Heart right ventricle (tissue), 16 donors: ENCODE measurements at regions of chr17 and their contacts with region 1.

Region 1: GRCh38 chr17:37650419-37651003 is 7.3 kb upstream of the DDX52 start:
- DNase-seq: peak in 1 of 2 donors; percentile 6
- ATAC-seq: peak in 3 of 8 donors; percentile 38 to 59 (median 39)
- H3K4me3 ChIP-seq: no peak overlapping the region
- H3K27ac ChIP-seq: no peak overlapping the region
- H3K4me1 ChIP-seq: peaks cover 0 to 9% (median 0%) of the 10 kb centered on the region in 9 donors
- H3K27me3 ChIP-seq: peaks cover 0 to 78% (median 19%) of the 10 kb centered on the region in 7 donors
- CTCF ChIP-seq: peak; percentile 4 to 56 (median 48)

Region 2: GRCh38 chr17:37710344-37710886 is 59.9 kb after region 1 on chr17:
- intact Hi-C with region 1: loop called in 1 of 10 experiments (anchors 10 kb)
- DNase-seq: no peak
- ATAC-seq: no peak
- H3K4me3 ChIP-seq: no peak overlapping the region
- H3K27ac ChIP-seq: no peak overlapping the region
- H3K4me1 ChIP-seq: no peaks in the 10 kb centered on the region
- H3K27me3 ChIP-seq: peaks cover 0 to 45% (median 22%) of the 10 kb centered on the region in 7 donors
- CTCF ChIP-seq: no peak

Region 3: GRCh38 chr17:37761059-37761458 is 110.5 kb after region 1 on chr17:
- intact Hi-C with region 1: loop called in 1 of 10 experiments (anchors 10 kb)
- DNase-seq: no peak
- ATAC-seq: no peak
- H3K4me3 ChIP-seq: no peak overlapping the region
- H3K27ac ChIP-seq: no peak overlapping the region
- H3K4me1 ChIP-seq: peaks cover 0 to 7% (median 0%) of the 10 kb centered on the region in 9 donors
- H3K27me3 ChIP-seq: peaks cover 0 to 90% (median 45%) of the 10 kb centered on the region in 7 donors
- CTCF ChIP-seq: no peak

Region 4: GRCh38 chr17:37770631-37771518 is 120.4 kb after region 1 on chr17:
- intact Hi-C with region 1: loop called in 4 of 10 experiments (anchors 10 kb)
- DNase-seq: peak; percentile 10 to 41
- ATAC-seq: peak in 1 of 8 donors; percentile 51
- H3K4me3 ChIP-seq: no peak overlapping the region
- H3K27ac ChIP-seq: no peak overlapping the region
- H3K4me1 ChIP-seq: no peaks in the 10 kb centered on the region
- H3K27me3 ChIP-seq: peaks cover 0 to 39% (median 14%) of the 10 kb centered on the region in 7 donors
- CTCF ChIP-seq: peak; percentile 28 to 65 (median 58)

Region 5: DNA sequence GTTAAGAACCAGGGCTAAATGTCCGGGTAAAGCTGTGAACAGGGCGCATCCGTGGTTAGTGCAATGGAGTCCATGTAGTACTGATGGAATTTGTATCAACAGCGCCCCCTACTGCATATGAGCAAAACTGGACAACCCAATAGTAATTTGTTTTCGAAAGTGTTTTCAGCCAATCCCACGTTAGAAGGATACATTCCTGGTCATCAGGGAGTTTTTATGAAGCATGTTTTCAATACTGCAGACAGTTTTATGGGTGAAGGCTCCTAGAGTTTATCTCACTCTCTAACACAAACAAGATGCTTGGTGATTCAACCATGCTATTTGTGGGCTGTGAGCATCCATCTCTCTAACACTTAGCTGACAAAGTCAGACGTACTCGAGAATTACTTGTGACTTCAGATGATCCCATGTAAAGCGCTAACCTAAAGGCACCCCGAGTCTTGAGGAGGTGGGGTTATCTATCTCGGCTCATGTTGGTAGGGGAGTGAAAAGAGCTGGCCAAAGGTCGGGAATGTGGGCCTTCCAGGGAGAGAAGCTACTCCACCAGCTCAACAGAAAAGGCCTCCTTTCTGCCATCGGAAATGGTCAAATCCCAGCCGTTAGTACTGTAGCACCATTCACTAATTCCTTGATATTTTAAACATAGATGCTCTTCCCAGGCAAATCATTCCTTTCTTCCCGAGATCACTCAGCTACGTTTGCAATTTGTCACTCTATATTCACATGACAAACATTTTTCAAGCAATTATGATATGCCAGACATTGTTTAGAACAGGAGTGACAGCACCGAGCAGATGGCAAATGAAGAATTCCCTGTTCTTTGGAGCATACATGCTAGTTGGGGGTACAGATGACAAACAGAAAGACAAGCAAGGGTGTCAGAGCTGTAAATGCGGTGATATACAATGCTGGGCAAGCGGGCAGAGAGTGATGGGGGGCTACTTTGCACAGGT is 141.2 kb after region 1 on chr17:
- intact Hi-C with region 1: loop called in 1 of 10 experiments (anchors 10 kb)
- DNase-seq: no peak
- ATAC-seq: no peak
- H3K4me3 ChIP-seq: no peak overlapping the region
- H3K27ac ChIP-seq: no peak overlapping the region
- H3K4me1 ChIP-seq: no peaks in the 10 kb centered on the region
- H3K27me3 ChIP-seq: peaks cover 0 to 65% (median 39%) of the 10 kb centered on the region in 7 donors
- CTCF ChIP-seq: peak in 8 of 9 donors; percentile 16 to 57 (median 28)

Region 6: GRCh38 chr17:37818689-37819088 is 168.2 kb after region 1 on chr17:
- intact Hi-C with region 1: loop called in 6 of 10 experiments (anchors 2 to 10 kb)
- DNase-seq: no peak
- ATAC-seq: no peak
- H3K4me3 ChIP-seq: no peak overlapping the region
- H3K27ac ChIP-seq: no peak overlapping the region
- H3K4me1 ChIP-seq: peaks cover 0 to 18% (median 0%) of the 10 kb centered on the region in 9 donors
- H3K27me3 ChIP-seq: peaks cover 0 to 30% (median 11%) of the 10 kb centered on the region in 7 donors
- CTCF ChIP-seq: no peak